Upper lobe of right lung (tissue), 1 donor: ENCODE measurements at regions of chr1 and their contacts with region 1.

Region 1: GRCh38 chr1:15323351-15323988 is 76.4 kb downstream of the FHAD1 start:
- DNase-seq: peak; percentile 82
- ATAC-seq: peak; percentile 95
- H3K4me3 ChIP-seq: no peak overlapping the region
- H3K27ac ChIP-seq: no peak overlapping the region
- H3K4me1 ChIP-seq: peaks cover 15% of the 10 kb centered on the region
- H3K27me3 ChIP-seq: no peaks in the 10 kb centered on the region
- CTCF ChIP-seq: peak; percentile 99

Region 2: GRCh38 chr1:14987829-14988603 is 335.5 kb before region 1 on chr1:
- intact Hi-C with region 1: no loop called
- DNase-seq: no peak
- ATAC-seq: peak; percentile 26
- H3K4me3 ChIP-seq: no peak overlapping the region
- H3K27ac ChIP-seq: no peak overlapping the region
- H3K4me1 ChIP-seq: peaks cover 7% of the 10 kb centered on the region
- H3K27me3 ChIP-seq: no peaks in the 10 kb centered on the region
- CTCF ChIP-seq: no peak

Region 3: DNA sequence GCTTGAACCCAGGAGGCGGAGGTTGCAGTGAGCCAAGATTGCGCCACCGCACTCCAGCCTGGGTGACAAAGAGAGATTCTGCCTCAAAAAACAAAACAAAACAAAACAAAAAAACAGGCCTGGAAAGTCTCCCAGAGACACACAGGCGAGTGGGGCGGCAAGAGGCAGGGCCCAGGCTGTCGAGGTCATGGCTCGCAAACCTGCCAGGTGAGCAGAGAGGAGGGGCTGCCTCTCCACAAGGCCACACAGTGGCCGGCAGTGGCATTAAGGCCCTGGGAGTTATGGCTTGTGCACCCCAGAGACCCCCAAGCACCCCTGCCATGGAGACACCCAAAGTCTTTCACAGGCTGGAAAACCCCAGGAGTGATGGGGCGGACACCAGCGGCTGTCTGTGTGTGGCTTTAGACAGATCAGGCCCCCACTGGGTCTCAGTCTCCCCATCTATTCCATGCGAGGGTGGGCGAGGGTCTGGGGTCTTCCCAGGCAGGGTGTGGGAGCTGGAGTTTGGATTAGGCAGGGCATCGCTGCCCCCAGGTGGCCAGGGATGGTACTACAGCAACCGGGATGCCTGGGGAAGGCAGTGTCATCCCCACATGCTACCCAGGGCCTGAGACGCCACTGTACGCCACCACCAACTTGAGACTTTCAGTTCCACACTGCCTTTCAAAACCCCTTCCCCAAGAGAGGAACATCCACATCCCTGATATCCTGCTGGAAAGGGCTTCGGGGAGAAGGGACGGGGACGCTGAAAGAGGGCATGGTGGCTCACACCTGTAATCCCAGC is 107.5 kb after region 1 on chr1:
- intact Hi-C with region 1: loop called (anchors 5 kb)
- DNase-seq: peak; percentile 83
- ATAC-seq: peak; percentile 82
- H3K4me3 ChIP-seq: no peak overlapping the region
- H3K27ac ChIP-seq: no peak overlapping the region
- H3K4me1 ChIP-seq: no peaks in the 10 kb centered on the region
- H3K27me3 ChIP-seq: no peaks in the 10 kb centered on the region
- CTCF ChIP-seq: peak; percentile 98